T-cell (primary cell): ENCODE measurements at regions of chr7 and their contacts with region 1.

Region 1: GRCh38 chr7:77729574-77730348 is 33.5 kb downstream of the RSBN1L start:
- DNase-seq: no peak
- ATAC-seq: no peak
- H3K4me3 ChIP-seq: no peak overlapping the region
- H3K4me3 Mint-ChIP-seq: peak overlapping the region in 1 of 3 donors; percentile 1
- H3K27ac ChIP-seq: no peak overlapping the region
- H3K27ac Mint-ChIP-seq: peak overlapping the region; percentile 36 to 51
- H3K4me1 ChIP-seq: peaks cover 12 to 43% of the 10 kb centered on the region in 2 experiments
- H3K4me1 Mint-ChIP-seq: peaks cover 65 to 69% (median 69%) of the 10 kb centered on the region in 3 donors
- H3K27me3 ChIP-seq: no peaks in the 10 kb centered on the region
- H3K27me3 Mint-ChIP-seq: no peaks in the 10 kb centered on the region

Region 2: GRCh38 chr7:77407906-77408305 is 321.9 kb before region 1 on chr7:
- CTCF ChIA-PET with region 1: no interaction called
- POLR2A ChIA-PET with region 1: interaction called in 1 of 2 experiments, 15 read pairs
- DNase-seq: no peak
- ATAC-seq: no peak
- H3K4me3 ChIP-seq: no peak overlapping the region
- H3K4me3 Mint-ChIP-seq: no peak overlapping the region
- H3K27ac ChIP-seq: no peak overlapping the region
- H3K27ac Mint-ChIP-seq: no peak overlapping the region
- H3K4me1 ChIP-seq: no peaks in the 10 kb centered on the region
- H3K4me1 Mint-ChIP-seq: peaks cover 8 to 28% (median 23%) of the 10 kb centered on the region in 3 donors
- H3K27me3 ChIP-seq: no peaks in the 10 kb centered on the region
- H3K27me3 Mint-ChIP-seq: no peaks in the 10 kb centered on the region

Region 3: GRCh38 chr7:77716804-77717203 is 13.0 kb before region 1 on chr7:
- CTCF ChIA-PET with region 1: interaction called, 3 to 6 read pairs
- POLR2A ChIA-PET with region 1: interaction called, 4 to 13 read pairs
- DNase-seq: no peak
- ATAC-seq: no peak
- H3K4me3 ChIP-seq: no peak overlapping the region
- H3K4me3 Mint-ChIP-seq: no peak overlapping the region
- H3K27ac ChIP-seq: no peak overlapping the region
- H3K27ac Mint-ChIP-seq: no peak overlapping the region
- H3K4me1 ChIP-seq: peaks cover 10 to 23% of the 10 kb centered on the region in 2 experiments
- H3K4me1 Mint-ChIP-seq: peaks cover 63 to 72% (median 66%) of the 10 kb centered on the region in 3 donors
- H3K27me3 ChIP-seq: no peaks in the 10 kb centered on the region
- H3K27me3 Mint-ChIP-seq: no peaks in the 10 kb centered on the region